ENCODE measurements at regions of chr2 and their contacts with region 1.

Region 1: DNA sequence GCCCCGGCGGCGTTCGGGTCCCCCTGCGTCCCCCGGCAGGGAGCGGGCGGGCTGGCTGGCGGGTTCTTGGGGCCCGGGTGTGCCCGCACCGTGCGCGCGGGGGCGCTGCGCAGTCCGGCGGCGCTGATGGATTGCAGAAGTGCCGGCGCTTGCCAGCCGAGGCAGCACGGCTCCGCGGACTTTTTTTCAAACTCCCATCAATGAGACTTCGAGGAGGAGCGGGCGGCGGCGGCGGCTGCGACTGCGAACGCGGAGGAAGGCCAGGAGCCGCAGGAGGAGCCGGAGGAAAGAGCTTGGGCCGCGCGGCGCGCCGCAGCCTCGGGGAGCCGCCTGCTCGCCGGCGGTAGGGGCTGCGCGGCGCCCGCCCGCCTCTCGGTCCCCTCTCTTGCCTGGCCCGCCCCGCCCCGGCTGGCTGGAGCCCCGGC is at the start of gene GLI2:
- DNase-seq: peak; percentile 71 to 90
- H3K4me3 ChIP-seq: peak within 1 kb of the TSS; percentile 62 to 67
- H3K27ac ChIP-seq: peak within 1 kb of the TSS; percentile 79 to 91
- H3K4me1 ChIP-seq: peaks cover 0 to 40% (median 27%) of the 10 kb centered on the region in 4 donors
- H3K27me3 ChIP-seq: no peaks in the 10 kb centered on the region
- CTCF ChIP-seq: peak; percentile 64 to 79

Region 2: DNA sequence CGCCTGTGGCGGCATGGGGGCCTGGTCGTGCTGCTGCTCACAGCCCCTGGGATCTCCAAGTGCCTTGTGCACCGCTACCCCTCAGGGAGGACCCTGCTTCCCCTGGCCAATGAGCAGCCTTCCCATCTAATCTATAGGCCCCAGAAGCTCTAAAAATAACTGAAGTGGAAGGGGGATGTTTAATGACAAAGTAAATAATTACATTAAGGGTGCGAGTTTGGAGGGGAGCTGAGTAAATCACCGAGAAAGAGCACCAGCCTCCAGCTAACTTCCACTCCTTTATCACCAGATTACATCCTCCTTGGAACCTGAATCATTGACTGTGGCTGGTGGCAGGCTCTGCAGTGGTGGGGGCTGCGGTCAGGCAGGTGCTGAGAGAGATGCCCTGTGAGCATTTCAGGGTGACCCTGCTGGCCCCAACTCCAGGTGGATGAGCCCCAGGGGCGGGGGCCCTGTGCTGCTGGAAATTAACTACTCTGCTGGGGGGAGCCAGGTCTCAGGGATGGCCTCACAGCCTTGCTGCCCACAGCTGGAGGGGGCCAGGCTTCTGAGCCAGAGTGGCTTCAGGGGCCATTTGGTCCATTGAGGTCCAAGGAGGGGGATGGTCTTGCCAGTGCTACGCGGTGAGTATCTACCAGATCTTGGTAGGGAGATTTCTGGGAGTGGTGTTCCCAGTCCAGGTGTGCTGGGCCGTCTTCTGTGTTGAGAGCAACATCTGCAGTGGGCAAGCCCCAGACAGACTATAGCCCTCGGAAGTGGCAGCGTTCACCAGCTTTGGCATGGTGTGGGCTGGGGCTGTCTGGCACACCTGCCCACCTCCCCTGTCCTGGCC is 74.1 kb after region 1 on chr2:
- intact Hi-C with region 1: loop called (anchors 5 kb)
- DNase-seq: no peak
- H3K4me3 ChIP-seq: no peak overlapping the region
- H3K27ac ChIP-seq: no peak overlapping the region
- H3K4me1 ChIP-seq: peaks cover 0 to 24% (median 20%) of the 10 kb centered on the region in 4 donors
- H3K27me3 ChIP-seq: no peaks in the 10 kb centered on the region
- CTCF ChIP-seq: no peak

Region 3: DNA sequence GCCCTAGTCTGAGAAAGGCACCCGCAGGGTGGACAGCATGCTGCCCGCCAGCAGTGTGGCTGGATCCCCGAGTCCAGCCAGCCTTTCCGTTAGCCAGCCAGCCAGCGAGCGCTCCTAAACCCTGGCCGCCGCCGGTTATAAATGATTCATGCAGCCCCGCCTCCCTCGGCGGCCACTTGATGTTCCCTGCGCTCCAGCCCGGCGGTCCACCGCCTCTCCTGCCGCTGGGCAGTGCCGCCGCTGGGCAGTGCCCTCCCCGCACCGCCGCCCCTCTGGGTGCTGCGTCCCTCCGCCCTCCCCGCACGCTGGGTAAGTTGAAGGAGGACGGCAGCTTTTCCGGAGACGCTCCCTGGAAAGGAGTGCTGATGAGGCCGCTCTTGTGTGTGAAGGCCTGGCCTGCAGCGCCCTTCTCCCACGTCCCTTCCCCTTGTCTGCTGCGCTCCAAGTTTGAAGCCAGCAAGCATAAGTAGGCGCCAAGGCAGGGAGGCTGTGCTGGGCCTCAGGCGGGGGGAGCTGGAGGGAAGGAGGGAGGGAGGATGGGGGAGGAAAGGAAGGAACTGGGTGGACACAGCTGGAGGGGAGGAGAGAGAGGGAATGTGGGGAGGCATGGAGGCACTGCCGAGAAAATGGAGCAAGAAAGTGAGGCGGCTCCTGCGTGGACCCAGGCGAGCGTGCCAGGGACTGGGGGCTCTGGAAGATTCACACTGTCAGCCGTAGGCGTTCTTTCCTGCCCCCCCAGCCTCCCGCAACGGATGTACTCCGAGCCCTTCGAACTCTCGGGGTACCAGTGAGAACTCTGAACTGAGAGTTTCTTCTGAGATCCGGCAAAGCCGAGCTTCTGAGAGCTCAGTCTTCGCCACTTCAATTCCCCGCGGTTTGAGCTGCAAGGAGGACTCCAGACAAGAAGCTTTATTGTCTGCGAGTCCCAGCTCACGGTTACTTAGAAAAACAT is 131.8 kb after region 1 on chr2:
- intact Hi-C with region 1: loop called (anchors 5 kb)
- DNase-seq: peak; percentile 90 to 95
- H3K4me3 ChIP-seq: peak overlapping the region; percentile 48 to 51
- H3K27ac ChIP-seq: peak overlapping the region; percentile 82 to 93
- H3K4me1 ChIP-seq: peaks cover 0 to 49% (median 32%) of the 10 kb centered on the region in 4 donors
- H3K27me3 ChIP-seq: no peaks in the 10 kb centered on the region
- CTCF ChIP-seq: peak in 1 of 2 experiments; percentile 8